Activated naive CD4-positive, alpha-beta T cell treated with anti-CD3 and anti-CD28 coated beads for 36 hours (primary cell): ENCODE measurements at regions of chr11 and their contacts with region 1.

Region 1: DNA sequence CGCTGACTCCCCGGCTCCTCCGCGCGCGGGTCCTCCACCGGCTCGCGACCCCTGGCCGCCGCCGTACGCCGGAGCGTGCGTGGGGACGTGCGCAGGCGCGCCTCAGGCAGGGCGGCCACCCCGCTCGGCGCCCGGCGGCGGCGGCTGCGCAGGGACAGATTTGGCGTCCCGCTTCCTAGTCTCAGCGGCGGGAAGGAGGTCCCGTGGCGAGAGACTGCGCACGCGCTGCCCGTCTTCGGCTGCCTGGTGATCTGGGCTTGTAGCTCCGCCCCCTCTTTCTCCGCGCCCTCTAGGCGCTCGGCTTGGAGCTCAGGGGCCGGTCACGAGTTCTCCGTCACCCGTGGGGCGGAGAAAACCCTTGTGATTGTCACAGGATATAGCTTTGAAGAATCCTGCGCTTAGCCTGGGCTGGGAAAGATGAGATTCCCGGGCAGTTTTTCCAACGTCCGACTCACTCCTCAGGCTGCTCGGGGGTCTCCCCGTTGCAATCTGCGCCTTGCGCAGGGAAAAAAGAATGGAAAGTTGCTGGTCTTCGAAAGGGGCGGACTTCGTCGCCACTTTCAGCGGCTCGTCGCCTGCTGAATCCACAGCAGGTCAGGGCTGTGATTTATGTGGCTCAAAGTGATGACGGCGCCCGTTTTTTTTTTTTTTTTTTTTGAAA is at the start of gene PATL1:
- DNase-seq: peak; percentile 99
- H3K4me3 Mint-ChIP-seq: peak within 1 kb of the TSS; percentile 87
- H3K27ac Mint-ChIP-seq: peak within 1 kb of the TSS; percentile 91
- H3K4me1 Mint-ChIP-seq: peaks cover 37% of the 10 kb centered on the region
- H3K27me3 Mint-ChIP-seq: no peaks in the 10 kb centered on the region
- total RNA-seq, gene PATL1: 56.7 to 56.8 TPM

Region 2: DNA sequence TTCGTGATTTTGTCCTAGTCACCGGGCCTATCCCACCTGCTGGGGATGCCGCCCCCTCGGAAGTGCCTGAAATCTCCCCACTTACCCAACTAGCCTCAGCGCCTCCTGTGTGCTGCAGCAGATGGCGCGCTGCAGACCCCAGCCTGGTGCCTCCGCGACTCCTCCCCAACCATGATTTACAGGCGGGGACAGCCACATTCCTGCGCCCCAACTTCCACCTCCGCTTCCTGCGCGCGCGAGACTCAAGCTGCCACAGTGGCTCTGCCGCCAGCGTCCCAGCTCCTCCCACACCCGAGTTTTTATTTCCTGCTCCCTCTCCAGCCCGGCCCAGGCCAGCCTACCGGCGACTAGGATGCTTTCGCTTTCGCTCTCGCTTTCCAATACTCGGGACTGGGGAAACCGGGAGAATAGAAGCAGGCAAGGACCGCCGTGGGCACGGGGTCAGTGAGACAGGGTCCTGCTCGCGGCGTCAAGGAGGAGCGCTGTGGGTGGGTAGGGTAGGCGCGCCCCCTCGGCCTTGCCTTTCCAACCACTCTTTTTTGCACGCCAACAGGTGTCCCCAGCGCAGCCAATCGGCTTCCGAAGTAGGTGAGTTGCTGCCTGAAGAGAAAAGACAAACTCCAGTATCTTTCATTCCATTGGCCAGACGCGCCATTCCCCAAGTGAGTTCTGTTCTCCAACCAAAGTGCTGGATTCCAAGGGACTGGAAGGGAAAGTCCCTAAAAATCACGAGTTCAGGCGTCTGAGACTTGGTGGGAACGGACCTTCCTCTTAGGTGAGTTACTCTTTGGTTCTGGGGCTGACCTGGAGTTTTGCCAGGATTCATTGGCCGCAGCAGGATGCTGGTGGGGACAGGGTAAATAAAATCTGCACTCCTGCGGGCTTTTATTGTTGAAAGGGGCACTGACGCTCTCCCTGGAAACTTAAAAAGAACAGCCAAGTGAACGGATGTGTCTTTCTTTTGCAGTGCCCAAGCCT is 526.3 kb before region 1 on chr11 and contains the start of gene FAM111A:
- CTCF ChIA-PET with region 1: no interaction called
- intact Hi-C with region 1: loop called (anchors 1 kb)
- DNase-seq: peak; percentile 88
- H3K4me3 Mint-ChIP-seq: peak within 1 kb of the TSS; percentile 95
- H3K27ac Mint-ChIP-seq: peak within 1 kb of the TSS; percentile 91
- H3K4me1 Mint-ChIP-seq: peaks cover 40% of the 10 kb centered on the region
- H3K27me3 Mint-ChIP-seq: no peaks in the 10 kb centered on the region
- total RNA-seq, gene FAM111A: 98.3 to 99.4 TPM

Region 3: DNA sequence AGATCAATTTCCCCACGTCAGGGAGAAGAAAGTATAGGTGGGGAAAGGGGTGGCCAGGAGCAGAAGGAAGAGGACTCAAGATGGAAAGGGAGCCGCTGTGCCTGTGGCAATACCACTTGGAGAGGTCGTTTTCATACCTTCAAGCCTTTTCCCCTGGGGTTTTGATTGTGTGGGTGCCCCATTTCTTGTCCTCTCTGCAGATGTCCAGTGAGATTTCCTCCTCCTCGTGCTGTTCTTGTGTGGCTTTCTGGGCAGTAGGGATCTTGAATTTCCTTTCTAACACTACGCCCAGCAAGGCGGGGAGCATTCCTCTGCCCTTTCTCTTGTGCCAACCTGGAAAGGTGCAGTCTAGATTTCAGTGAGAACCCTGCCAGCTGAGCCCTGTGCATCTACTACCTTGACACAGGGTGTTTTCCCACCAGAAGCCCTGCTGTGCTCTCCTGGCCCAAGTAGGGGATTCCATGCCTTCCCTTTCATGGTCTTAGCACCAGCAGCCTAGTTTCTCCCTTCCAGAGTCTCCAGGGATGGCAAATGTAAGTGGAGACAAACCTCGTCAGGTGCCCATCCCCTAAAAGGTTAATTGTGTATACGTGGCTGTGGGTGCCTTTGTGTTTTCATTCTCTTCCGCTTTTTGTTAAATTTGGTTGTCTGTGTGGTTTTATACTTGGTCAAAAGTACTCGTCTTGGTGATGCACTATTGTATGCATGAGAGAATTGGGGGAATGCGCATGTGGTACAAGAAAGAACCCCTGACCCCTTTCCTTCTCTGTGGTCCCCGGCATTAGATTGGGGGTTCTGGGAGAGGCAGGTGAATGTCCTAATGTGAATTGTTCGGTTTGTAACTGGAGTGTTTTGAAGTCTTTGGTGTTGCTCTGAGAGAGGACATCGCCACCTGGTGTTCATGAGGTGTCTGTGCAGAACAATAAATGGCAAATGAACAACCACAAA is 385.0 kb before region 1 on chr11:
- CTCF ChIA-PET with region 1: no interaction called
- intact Hi-C with region 1: loop called (anchors 10 kb)
- DNase-seq: peak; percentile 62
- H3K4me3 Mint-ChIP-seq: peak overlapping the region; percentile 26
- H3K27ac Mint-ChIP-seq: no peak overlapping the region
- H3K4me1 Mint-ChIP-seq: peaks cover 15% of the 10 kb centered on the region
- H3K27me3 Mint-ChIP-seq: peaks cover 8% of the 10 kb centered on the region

Region 4: GRCh38 chr11:59550368-59550841 is 118.7 kb before region 1 on chr11:
- CTCF ChIA-PET with region 1: no interaction called
- intact Hi-C with region 1: loop called (anchors 1 kb)
- DNase-seq: peak; percentile 93
- H3K4me3 Mint-ChIP-seq: peak overlapping the region; percentile 79
- H3K27ac Mint-ChIP-seq: peak overlapping the region; percentile 93
- H3K4me1 Mint-ChIP-seq: peaks cover 27% of the 10 kb centered on the region
- H3K27me3 Mint-ChIP-seq: peaks cover 5% of the 10 kb centered on the region

Region 5: GRCh38 chr11:59615637-59616395 is 53.3 kb before region 1 on chr11 and contains the start of gene OSBP:
- CTCF ChIA-PET with region 1: no interaction called
- intact Hi-C with region 1: loop called (anchors 1 kb)
- DNase-seq: peak; percentile 99
- H3K4me3 Mint-ChIP-seq: peak within 1 kb of the TSS; percentile 81
- H3K27ac Mint-ChIP-seq: peak within 1 kb of the TSS; percentile 86
- H3K4me1 Mint-ChIP-seq: peaks cover 35% of the 10 kb centered on the region
- H3K27me3 Mint-ChIP-seq: no peaks in the 10 kb centered on the region
- total RNA-seq, gene OSBP: 33.9 to 37.0 TPM

Region 6: GRCh38 chr11:59810189-59810910 is 141.3 kb after region 1 on chr11 and contains the start of gene MRPL16:
- CTCF ChIA-PET with region 1: interaction called, 3 read pairs
- intact Hi-C with region 1: loop called (anchors 1 kb)
- DNase-seq: peak; percentile 92
- H3K4me3 Mint-ChIP-seq: peak within 1 kb of the TSS; percentile 87
- H3K27ac Mint-ChIP-seq: peak within 1 kb of the TSS; percentile 82
- H3K4me1 Mint-ChIP-seq: peaks cover 18% of the 10 kb centered on the region
- H3K27me3 Mint-ChIP-seq: no peaks in the 10 kb centered on the region
- total RNA-seq, gene MRPL16: 59.5 to 63.2 TPM